ENCODE measurements at regions of chr3 and their contacts with region 1.

Region 1: DNA sequence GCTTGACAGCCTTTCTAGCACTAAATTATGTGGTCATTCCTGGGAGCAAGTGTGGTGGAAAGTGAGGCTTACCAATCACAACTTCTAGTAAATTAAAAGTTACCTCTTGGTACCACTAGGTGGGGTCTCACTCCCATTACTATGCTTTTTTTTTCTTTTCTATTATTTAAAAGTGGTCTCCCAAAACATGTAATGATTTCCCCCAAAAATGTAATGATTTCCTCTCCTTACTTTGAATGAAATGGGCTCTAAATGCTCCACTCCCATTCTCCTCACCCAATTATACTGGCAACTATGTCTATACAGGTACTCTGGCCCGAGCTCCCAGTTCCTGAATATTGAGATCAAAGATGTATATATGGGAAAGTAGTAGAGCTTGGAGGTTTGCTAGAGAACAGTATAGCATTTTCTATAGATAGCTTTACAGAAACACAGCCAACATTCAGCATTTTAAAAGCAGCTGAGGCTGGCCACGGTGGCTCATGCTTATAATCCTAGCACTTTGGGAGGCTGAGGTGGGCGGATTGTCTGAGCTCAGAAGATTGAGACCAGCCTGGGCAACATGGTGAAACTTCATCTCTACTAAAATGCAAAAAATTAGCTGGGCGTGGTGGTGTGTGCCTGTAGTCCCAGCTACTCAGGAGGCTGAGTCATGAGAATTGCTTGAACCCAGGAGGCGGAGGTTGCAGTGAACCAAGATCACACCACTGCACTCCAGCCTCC is 70.9 kb downstream of the DCUN1D1 start:
- DNase-seq: peak in 1 of 9 donors; percentile 16
- ATAC-seq: peak; percentile 46
- H3K4me3 ChIP-seq: no peak overlapping the region
- H3K4me3 Mint-ChIP-seq: no peak overlapping the region
- H3K27ac ChIP-seq: peak overlapping the region; percentile 16
- H3K27ac Mint-ChIP-seq: peak overlapping the region in 8 of 9 donors; percentile 20 to 88 (median 72)
- H3K4me1 ChIP-seq: peaks cover 15 to 17% of the 10 kb centered on the region in 2 donors
- H3K4me1 Mint-ChIP-seq: peaks cover 22 to 50% (median 42%) of the 10 kb centered on the region in 7 donors
- H3K27me3 ChIP-seq: no peaks in the 10 kb centered on the region
- H3K27me3 Mint-ChIP-seq: no peaks in the 10 kb centered on the region

Region 2: GRCh38 chr3:183018421-183019192 is 109.1 kb after region 1 on chr3:
- CTCF ChIA-PET with region 1: no interaction called
- POLR2A ChIA-PET with region 1: no interaction called
- intact Hi-C with region 1: loop called in 1 of 2 experiments (anchors 10 kb)
- DNase-seq: peak in 3 of 9 donors; percentile 12 to 35 (median 26)
- ATAC-seq: no peak
- H3K4me3 ChIP-seq: no peak overlapping the region
- H3K4me3 Mint-ChIP-seq: no peak overlapping the region
- H3K27ac ChIP-seq: no peak overlapping the region
- H3K27ac Mint-ChIP-seq: peak overlapping the region in 1 of 9 donors; percentile 77
- H3K4me1 ChIP-seq: no peaks in the 10 kb centered on the region
- H3K4me1 Mint-ChIP-seq: no peaks in the 10 kb centered on the region
- H3K27me3 ChIP-seq: no peaks in the 10 kb centered on the region
- H3K27me3 Mint-ChIP-seq: no peaks in the 10 kb centered on the region

Measured in naive thymus-derived CD4-positive, alpha-beta T cell (primary cell).